ENCODE measurements at regions of chr9 and their contacts with region 1.

Region 1: GRCh38 chr9:105608721-105609598 is 51.0 kb downstream of the FKTN start:
- DNase-seq: peak; percentile 69
- H3K4me3 ChIP-seq: no peak overlapping the region
- H3K27ac ChIP-seq: no peak overlapping the region
- H3K4me1 ChIP-seq: no peaks in the 10 kb centered on the region
- H3K27me3 ChIP-seq: no peaks in the 10 kb centered on the region
- CTCF ChIP-seq: peak; percentile 64

Region 2: DNA sequence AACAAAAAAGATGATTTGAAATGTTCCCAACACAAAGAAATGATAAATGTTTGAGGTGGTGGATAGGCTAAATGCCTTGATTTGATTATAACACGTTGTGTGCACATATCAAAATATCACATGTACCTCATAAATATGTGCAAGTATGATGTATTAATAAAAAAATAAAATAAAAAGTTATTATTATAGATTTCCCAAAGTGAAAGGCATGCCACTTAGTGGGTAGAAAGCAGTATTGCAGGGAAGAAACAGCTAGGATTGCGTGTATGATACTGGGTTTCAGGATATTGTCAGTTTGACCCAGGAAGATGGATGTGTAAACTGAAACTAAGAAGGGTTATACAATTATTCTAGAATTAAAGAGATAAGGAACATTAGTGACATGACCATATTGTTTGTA is 81.8 kb after region 1 on chr9:
- CTCF ChIA-PET with region 1: no interaction called
- POLR2A ChIA-PET with region 1: no interaction called
- intact Hi-C with region 1: no loop called
- DNase-seq: no peak
- H3K4me3 ChIP-seq: no peak overlapping the region
- H3K27ac ChIP-seq: no peak overlapping the region
- H3K4me1 ChIP-seq: peaks cover 4% of the 10 kb centered on the region
- H3K27me3 ChIP-seq: peaks cover 28% of the 10 kb centered on the region
- CTCF ChIP-seq: peak; percentile 56

Region 3: DNA sequence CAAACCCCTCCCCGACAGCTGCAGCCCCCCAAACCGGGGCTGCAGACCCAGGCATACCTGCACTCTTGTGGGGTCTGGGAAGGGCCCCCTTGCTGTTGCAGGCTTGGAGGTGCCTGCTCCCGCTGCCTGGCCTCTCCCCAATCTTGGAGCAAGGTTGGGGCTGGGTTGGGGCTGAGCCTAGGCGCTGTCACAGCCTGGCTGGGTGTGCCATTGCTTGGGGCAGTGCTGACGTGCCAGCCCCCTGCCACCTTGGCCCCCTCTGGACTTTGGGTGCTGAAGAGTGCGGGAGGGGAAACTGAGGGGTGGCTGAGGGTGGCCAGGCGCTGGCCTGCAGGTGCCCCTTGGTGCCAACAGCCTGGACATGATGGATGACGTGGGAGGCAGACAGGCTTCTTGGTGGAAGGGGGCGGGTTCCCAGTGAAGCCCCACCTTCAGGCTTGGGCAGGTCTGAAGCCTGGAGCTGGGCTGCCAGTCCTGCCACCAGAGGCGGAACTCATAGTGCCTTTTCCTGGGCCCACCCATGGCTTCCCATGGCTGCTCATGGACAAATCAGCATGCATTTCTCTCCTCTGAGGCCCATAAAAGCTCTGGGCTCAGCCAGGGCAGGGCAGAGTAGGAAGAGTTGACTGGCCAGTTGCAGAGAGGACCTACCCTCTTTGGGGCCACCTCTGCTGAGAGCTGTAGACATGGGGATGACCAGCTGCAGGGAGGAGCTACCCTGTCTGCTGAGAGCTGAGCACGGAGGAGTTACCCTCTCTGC is 104.5 kb after region 1 on chr9:
- CTCF ChIA-PET with region 1: no interaction called
- POLR2A ChIA-PET with region 1: no interaction called
- intact Hi-C with region 1: loop called (anchors 1 kb)
- DNase-seq: no peak
- H3K4me3 ChIP-seq: no peak overlapping the region
- H3K27ac ChIP-seq: no peak overlapping the region
- H3K4me1 ChIP-seq: no peaks in the 10 kb centered on the region
- H3K27me3 ChIP-seq: no peaks in the 10 kb centered on the region
- CTCF ChIP-seq: no peak

Region 4: DNA sequence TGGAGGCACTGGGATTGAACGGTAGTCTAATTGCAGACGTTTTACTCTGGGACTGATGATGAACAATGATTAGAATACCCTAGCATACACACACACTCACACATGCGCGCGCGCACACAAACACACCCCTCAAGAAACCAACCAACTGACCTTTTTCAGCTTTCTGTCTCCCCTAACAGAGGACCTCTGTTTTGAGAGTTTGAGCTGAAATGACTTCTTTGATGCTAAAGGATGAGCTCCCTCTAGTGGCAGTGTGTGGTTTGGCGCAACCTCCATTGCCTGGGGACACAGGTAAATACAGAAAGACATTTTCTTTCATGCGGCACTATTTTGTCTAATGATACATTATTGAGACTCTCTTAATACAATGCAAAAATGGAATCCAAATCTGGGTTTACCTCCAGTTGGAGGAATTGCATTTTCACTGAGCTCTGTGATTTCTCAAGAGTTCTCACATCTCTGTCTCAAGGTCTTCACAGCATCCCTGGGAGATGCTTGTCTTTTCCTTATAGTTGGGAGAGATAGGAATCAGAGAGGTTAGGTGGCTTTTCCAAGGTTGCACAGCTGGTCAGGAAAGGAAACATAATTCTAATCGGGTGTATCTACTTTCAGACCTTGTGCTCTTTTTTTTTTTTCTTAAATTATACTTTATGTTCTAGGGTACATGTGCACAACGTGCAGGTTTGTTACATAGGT is 272.8 kb after region 1 on chr9:
- CTCF ChIA-PET with region 1: no interaction called
- POLR2A ChIA-PET with region 1: no interaction called
- intact Hi-C with region 1: loop called (anchors 5 kb)
- DNase-seq: peak; percentile 70
- H3K4me3 ChIP-seq: no peak overlapping the region
- H3K27ac ChIP-seq: no peak overlapping the region
- H3K4me1 ChIP-seq: no peaks in the 10 kb centered on the region
- H3K27me3 ChIP-seq: no peaks in the 10 kb centered on the region
- CTCF ChIP-seq: peak; percentile 91

Measured in A673 (cell line).